ENCODE measurements at regions of chr6 and their contacts with region 1.

Region 1: GRCh38 chr6:15441215-15441868 is 195.5 kb downstream of the JARID2 start:
- H3K4me3 Mint-ChIP-seq: no peak overlapping the region
- H3K27ac Mint-ChIP-seq: peak overlapping the region; percentile 68
- H3K4me1 Mint-ChIP-seq: peaks cover 82% of the 10 kb centered on the region
- H3K27me3 Mint-ChIP-seq: no peaks in the 10 kb centered on the region

Region 2: GRCh38 chr6:15254070-15254841 is 187.1 kb before region 1 on chr6:
- intact Hi-C with region 1: loop called (anchors 5 kb)
- H3K4me3 Mint-ChIP-seq: no peak overlapping the region
- H3K27ac Mint-ChIP-seq: no peak overlapping the region
- H3K4me1 Mint-ChIP-seq: peaks cover 96% of the 10 kb centered on the region
- H3K27me3 Mint-ChIP-seq: no peaks in the 10 kb centered on the region

Region 3: DNA sequence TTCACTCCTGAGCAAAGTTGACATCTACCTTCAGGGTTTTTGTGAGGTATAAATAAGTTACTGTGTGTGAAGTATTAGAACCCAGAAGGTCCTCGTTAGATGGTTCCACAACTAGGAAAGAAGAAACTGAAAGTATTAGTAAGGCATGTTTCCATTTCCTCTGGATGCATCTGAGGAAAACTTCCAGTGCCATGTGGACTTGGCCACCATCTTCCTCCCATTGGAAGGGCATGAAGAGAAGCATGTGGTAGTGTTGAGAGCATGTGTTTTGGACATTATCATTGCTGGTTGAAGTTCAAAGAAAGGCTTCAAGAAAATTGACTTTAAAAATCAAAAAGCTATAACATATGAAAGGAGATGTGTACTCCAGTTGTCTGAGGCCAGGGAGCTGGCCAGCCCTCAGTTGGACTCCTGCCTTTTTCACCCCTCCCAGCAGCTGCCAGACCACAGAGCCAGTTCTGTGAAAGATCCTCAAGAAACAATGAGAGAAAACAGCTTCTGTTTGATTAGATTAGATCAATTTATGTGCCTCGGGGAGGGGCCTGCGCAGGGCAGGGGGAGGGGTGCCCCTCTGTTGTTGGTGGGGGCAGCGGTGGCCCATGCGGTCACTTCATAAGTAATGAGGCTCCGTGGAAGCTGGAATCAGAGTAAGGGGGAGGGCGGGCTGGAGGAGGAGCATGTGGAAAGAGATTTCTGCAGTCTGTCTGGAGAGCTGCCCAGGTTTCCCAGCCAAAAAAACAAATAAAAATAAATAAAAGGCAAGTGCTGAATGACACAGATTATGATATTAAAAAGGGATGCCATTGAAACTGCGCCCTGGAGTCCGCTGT is 41.5 kb before region 1 on chr6:
- intact Hi-C with region 1: loop called (anchors 5 kb)
- H3K4me3 Mint-ChIP-seq: peak overlapping the region; percentile 65
- H3K27ac Mint-ChIP-seq: peak overlapping the region; percentile 39
- H3K4me1 Mint-ChIP-seq: peaks cover 65% of the 10 kb centered on the region
- H3K27me3 Mint-ChIP-seq: no peaks in the 10 kb centered on the region

Region 4: GRCh38 chr6:15427331-15428070 is 13.8 kb before region 1 on chr6:
- intact Hi-C with region 1: loop called (anchors 2 kb)
- H3K4me3 Mint-ChIP-seq: no peak overlapping the region
- H3K27ac Mint-ChIP-seq: peak overlapping the region; percentile 77
- H3K4me1 Mint-ChIP-seq: peaks cover 95% of the 10 kb centered on the region
- H3K27me3 Mint-ChIP-seq: no peaks in the 10 kb centered on the region